Transverse colon (tissue), 4 donors: ENCODE measurements at regions of chr10 and their contacts with region 1.

Region 1: GRCh38 chr10:91797874-91798648 is at the start of gene TNKS2:
- DNase-seq: peak; percentile 95
- H3K4me3 ChIP-seq: peak within 1 kb of the TSS; percentile 74 to 98 (median 90)
- H3K27ac ChIP-seq: peak within 1 kb of the TSS; percentile 97 to 100 (median 99)
- H3K4me1 ChIP-seq: peaks cover 5 to 46% (median 29%) of the 10 kb centered on the region in 4 donors
- H3K27me3 ChIP-seq: no peaks in the 10 kb centered on the region
- CTCF ChIP-seq: no peak
- EP300 ChIP-seq: no peak
- POLR2A ChIP-seq: peak; percentile 84
- total RNA-seq, gene TNKS2: 27.2 to 38.7 (median 31.6) TPM

Region 2: DNA sequence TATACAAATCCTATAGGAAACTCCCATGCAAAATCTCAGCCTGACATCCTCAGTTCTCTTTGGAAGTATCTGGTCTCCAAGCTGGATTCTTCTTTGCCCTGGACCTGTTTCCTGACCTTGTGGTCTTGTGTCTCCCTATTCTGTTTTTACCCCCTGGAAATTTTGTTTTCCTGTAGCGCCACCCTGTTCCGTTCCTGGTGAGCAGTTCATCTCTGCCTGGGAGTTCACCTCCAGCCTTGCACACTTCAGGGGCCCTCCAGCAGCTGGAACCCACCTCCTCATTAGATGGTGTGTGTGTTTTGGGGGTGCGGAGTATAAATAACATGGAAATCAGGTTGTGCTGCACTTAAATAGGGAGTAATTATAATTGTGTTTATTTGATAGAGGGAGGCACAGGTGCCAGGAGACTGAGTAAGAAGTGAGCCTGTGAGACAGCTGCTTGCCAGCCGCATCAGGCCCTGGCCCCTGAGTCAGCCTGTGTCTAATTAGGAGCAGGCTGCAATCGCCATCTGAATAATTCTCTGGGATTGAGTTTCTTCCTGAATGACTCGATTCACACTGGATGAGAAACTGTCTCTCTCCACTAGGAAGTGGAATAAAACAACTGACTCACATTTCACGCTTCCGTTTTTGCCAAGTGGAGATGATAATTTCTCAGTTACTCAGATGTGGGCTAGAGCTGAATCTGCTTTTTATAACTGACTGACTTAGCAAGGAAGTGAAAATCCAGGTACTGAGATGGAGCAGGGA is 457.3 kb before region 1 on chr10:
- in situ Hi-C with region 1: no loop called
- intact Hi-C with region 1: no loop called
- DNase-seq: no peak
- H3K4me3 ChIP-seq: no peak overlapping the region
- H3K27ac ChIP-seq: no peak overlapping the region
- H3K4me1 ChIP-seq: no peaks in the 10 kb centered on the region
- H3K27me3 ChIP-seq: no peaks in the 10 kb centered on the region
- CTCF ChIP-seq: no peak
- EP300 ChIP-seq: no peak
- POLR2A ChIP-seq: no peak

Region 3: GRCh38 chr10:91908337-91909116 is 110.5 kb after region 1 on chr10:
- in situ Hi-C with region 1: loop called in 1 of 4 experiments (anchors 25 kb)
- intact Hi-C with region 1: no loop called
- DNase-seq: peak; percentile 77
- H3K4me3 ChIP-seq: peak overlapping the region; percentile 56 to 94 (median 78)
- H3K27ac ChIP-seq: peak overlapping the region; percentile 76 to 84 (median 81)
- H3K4me1 ChIP-seq: peaks cover 0 to 20% (median 3%) of the 10 kb centered on the region in 4 donors
- H3K27me3 ChIP-seq: no peaks in the 10 kb centered on the region
- CTCF ChIP-seq: peak in 4 of 5 experiments; percentile 22 to 35 (median 30)
- EP300 ChIP-seq: no peak
- POLR2A ChIP-seq: no peak